ENCODE measurements at regions of chr9 and their contacts with region 1.

Region 1: DNA sequence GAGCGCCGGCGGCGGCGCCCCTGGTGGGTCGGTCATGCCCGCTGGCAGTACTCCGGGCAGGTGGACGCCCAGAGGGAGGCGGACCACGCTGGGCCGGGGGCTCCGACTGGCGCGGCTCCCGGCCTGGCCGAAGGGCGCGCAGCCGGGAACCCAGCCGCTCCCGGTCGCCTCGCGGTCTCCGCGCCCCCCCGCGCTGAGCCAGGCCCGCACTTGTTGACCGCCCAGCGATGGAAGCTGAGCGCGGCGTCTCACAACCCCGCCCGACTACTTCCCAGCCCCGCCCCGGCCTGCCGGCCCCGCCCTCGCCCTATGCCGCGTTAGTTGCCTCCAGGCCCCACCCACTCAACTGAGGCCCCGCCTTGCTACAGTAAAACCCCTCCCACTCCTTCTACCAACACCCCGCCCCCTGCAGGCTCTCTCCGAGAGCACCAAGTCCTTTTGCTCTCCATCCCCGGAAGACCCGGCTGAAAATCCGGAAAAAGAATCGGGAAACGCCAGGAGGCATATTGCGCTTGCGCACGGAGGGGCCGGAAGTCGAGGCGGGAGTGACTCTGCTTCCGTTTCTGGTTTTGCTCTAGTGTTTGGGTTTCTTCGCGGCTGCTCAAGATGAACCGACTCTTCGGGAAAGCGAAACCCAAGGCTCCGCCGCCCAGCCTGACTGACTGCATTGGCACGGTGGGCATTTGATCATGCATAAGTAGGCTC is at the starts of genes BAG1 and CHMP5:
- DNase-seq: peak; percentile 100
- H3K4me3 Mint-ChIP-seq: peak within 1 kb of the TSS; percentile 91
- H3K27ac Mint-ChIP-seq: peak within 1 kb of the TSS; percentile 94
- H3K4me1 Mint-ChIP-seq: peaks cover 42% of the 10 kb centered on the region
- H3K27me3 Mint-ChIP-seq: no peaks in the 10 kb centered on the region
- total RNA-seq, gene BAG1: 52.7 to 56.6 TPM
- total RNA-seq, gene CHMP5: 116 to 119 TPM

Region 2: DNA sequence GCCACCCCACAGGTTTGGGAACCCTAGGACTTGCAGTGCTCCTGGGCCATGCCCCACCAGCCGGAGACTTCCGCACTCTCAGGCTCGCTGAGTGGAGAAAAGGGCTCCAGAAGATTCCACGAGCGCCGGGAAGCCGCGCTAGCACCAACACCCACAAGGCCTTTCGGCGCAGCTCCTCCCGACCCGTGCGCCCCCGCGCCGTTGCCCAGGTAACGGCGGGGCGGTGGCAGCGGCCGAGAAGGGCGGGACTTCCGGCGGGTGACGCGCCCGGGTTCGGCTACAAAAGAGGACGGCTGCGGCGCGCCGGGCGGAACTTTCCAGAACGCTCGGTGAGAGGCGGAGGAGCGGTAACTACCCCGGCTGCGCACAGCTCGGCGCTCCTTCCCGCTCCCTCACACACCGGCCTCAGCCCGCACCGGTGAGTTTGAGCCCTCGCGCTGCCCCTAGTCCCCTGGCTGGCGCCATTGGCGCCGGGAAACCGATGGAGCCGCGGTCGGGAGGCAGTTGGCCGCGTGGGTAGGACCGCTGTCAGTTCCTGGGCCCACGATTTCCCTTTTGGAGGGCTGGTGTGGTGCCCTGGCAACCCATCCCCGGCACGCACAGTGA is 239.6 kb before region 1 on chr9 and contains the start of gene DNAJA1:
- CTCF ChIA-PET with region 1: no interaction called
- POLR2A ChIA-PET with region 1: interaction called, 16 read pairs
- intact Hi-C with region 1: loop called (anchors 1 kb)
- DNase-seq: peak; percentile 96
- H3K4me3 Mint-ChIP-seq: peak within 1 kb of the TSS; percentile 98
- H3K27ac Mint-ChIP-seq: peak within 1 kb of the TSS; percentile 95
- H3K4me1 Mint-ChIP-seq: peaks cover 57% of the 10 kb centered on the region
- H3K27me3 Mint-ChIP-seq: no peaks in the 10 kb centered on the region
- total RNA-seq, gene DNAJA1: 173 to 184 TPM

Region 3: GRCh38 chr9:33076358-33077004 is 188.1 kb before region 1 on chr9 and contains the start of gene SMU1:
- CTCF ChIA-PET with region 1: no interaction called
- POLR2A ChIA-PET with region 1: no interaction called
- intact Hi-C with region 1: loop called (anchors 1 kb)
- DNase-seq: peak; percentile 98
- H3K4me3 Mint-ChIP-seq: peak within 1 kb of the TSS; percentile 100
- H3K27ac Mint-ChIP-seq: peak within 1 kb of the TSS; percentile 99
- H3K4me1 Mint-ChIP-seq: peaks cover 42% of the 10 kb centered on the region
- H3K27me3 Mint-ChIP-seq: no peaks in the 10 kb centered on the region
- total RNA-seq, gene SMU1: 25.8 to 26.1 TPM

Region 4: DNA sequence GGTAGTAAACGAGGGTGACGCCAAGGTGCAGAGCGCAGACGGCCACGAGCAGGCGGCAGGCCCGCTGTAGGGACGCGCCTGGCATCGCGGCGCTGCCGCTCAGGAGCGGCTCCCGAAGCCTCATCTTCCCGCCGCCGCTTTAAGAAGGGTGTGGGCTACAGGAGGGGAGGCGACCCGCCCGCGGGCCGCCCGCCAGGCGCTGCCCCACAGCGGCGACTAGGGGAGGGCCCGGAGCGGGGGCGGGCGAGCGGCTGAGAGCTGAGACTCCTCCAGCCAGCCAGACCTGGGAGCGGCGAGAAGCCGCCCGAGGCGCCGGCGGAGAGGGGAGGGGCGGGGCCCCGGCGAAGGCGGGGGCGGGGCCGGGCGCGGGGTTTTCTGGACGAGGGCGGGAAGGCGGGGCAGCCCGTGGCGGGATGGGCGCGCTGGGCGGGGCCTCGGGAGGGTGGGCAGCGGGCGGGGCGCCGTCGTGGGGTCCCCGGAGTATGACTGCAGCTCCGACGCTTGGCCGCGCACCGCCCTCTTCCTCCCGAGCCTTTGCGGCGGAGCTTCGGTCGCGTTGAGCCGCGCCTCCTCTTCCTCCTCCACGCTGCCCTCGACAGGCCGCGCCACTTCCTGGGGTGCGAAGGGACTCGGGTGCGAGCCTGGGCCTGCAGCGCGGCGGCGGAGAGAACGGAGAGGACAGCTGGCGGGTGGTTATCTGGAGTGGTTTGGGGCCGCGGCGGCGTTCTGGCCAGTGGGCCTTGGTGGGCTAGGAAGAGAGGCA is 97.4 kb before region 1 on chr9 and contains the start of gene B4GALT1:
- CTCF ChIA-PET with region 1: no interaction called
- POLR2A ChIA-PET with region 1: interaction called, 5 read pairs
- intact Hi-C with region 1: loop called (anchors 1 kb)
- DNase-seq: peak; percentile 98
- H3K4me3 Mint-ChIP-seq: peak within 1 kb of the TSS; percentile 95
- H3K27ac Mint-ChIP-seq: peak within 1 kb of the TSS; percentile 97
- H3K4me1 Mint-ChIP-seq: peaks cover 48% of the 10 kb centered on the region
- H3K27me3 Mint-ChIP-seq: no peaks in the 10 kb centered on the region
- total RNA-seq, gene B4GALT1: 76.6 to 78.0 TPM

Region 5: DNA sequence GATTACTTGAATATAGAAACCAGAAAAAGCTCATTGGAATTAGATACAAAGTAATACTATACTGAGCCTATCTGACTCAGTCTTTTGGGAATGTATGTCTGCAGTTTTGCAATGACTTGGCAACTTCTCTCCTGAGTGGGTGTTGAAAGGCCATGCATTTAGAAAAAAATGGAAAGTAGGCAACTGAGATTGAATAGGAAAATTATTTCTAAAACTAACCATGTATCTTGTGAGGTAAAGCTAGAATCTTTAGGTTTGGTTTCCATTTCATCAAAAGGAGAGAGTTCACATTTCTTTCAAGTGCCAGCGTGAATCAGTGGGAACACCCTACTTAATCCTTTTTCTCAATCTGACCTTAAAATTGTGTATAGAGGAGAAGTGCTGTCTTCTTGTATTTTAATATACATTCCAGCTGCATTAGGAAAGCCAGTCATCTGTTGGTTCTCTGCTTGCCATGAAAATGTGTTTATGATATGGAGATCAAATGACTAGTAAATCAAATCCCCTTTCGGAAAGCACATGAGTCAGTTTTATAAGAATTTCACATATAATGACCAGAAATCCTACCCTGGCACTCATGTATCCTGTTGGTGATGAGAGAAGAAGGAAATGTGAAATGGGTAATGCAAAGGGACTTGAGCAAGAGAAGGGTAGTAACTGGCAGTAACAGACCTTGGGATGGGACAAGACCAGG is 56.1 kb after region 1 on chr9:
- CTCF ChIA-PET with region 1: no interaction called
- POLR2A ChIA-PET with region 1: interaction called, 3 read pairs
- intact Hi-C with region 1: loop called (anchors 1 kb)
- DNase-seq: peak; percentile 25
- H3K4me3 Mint-ChIP-seq: no peak overlapping the region
- H3K27ac Mint-ChIP-seq: peak overlapping the region; percentile 80
- H3K4me1 Mint-ChIP-seq: peaks cover 27% of the 10 kb centered on the region
- H3K27me3 Mint-ChIP-seq: no peaks in the 10 kb centered on the region

Region 6: GRCh38 chr9:33473643-33474352 is 209.2 kb after region 1 on chr9 and contains the start of gene NOL6:
- CTCF ChIA-PET with region 1: no interaction called
- POLR2A ChIA-PET with region 1: no interaction called
- intact Hi-C with region 1: loop called (anchors 1 kb)
- DNase-seq: peak; percentile 99
- H3K4me3 Mint-ChIP-seq: peak within 1 kb of the TSS; percentile 99
- H3K27ac Mint-ChIP-seq: peak within 1 kb of the TSS; percentile 93
- H3K4me1 Mint-ChIP-seq: peaks cover 24% of the 10 kb centered on the region
- H3K27me3 Mint-ChIP-seq: no peaks in the 10 kb centered on the region
- total RNA-seq, gene NOL6: 38.1 to 39.7 TPM